Activated naive CD4-positive, alpha-beta T cell treated with anti-CD3 and anti-CD28 coated beads for 36 hours (primary cell): ENCODE measurements at regions of chr5 and their contacts with region 1.

Region 1: GRCh38 chr5:111512375-111513130 is at the start of gene STARD4:
- DNase-seq: peak; percentile 95
- H3K4me3 Mint-ChIP-seq: peak within 1 kb of the TSS; percentile 93
- H3K27ac Mint-ChIP-seq: peak within 1 kb of the TSS; percentile 94
- H3K4me1 Mint-ChIP-seq: peaks cover 37% of the 10 kb centered on the region
- H3K27me3 Mint-ChIP-seq: no peaks in the 10 kb centered on the region
- total RNA-seq, gene STARD4: 45.0 to 47.1 TPM

Region 2: DNA sequence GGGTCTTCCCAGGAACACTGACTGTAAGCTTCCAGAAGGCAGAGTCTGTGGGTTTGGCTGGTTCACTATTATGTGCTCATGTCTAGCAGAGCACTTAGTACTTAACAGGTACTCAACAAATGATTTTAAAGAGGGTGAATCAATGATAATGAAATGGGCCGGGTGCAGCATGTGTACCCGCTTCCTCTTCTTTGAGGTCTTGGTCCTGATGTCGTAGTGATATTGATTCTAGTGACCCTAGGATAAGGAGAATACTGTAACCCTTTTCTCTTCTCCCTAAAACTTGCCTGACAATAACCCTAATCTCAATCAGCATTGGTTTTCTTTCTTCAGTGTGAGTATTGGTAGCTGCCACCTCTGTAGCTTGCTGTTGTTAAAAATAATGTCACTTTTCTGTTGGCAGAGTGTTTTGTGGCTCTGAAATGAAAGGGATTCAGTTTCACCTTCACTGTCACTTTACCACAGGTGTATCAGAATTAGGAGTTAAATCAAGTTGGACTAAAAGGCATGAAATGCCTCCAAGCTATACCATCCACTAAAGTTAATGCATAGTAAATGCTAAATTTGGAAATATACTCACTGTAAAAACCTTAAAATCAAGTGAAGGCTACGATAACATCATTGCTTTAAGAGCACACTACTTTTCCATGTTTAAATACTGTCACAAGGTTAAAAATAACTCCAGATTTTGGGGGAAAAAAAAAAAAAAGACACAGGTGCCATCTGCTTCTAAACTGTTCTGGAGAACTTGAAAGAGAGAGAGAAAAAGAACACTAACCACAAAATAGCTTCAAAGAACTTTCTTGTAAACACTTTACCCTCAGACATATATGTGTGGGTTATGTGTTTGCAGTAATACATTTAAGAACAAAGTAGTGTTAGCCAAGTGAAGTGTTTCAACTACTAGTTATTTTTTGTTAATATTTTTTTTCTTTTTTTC is 282.4 kb before region 1 on chr5:
- CTCF ChIA-PET with region 1: no interaction called
- intact Hi-C with region 1: loop called (anchors 2 kb)
- DNase-seq: peak; percentile 43
- H3K4me3 Mint-ChIP-seq: peak overlapping the region; percentile 68
- H3K27ac Mint-ChIP-seq: peak overlapping the region; percentile 94
- H3K4me1 Mint-ChIP-seq: peaks cover 69% of the 10 kb centered on the region
- H3K27me3 Mint-ChIP-seq: no peaks in the 10 kb centered on the region

Region 3: DNA sequence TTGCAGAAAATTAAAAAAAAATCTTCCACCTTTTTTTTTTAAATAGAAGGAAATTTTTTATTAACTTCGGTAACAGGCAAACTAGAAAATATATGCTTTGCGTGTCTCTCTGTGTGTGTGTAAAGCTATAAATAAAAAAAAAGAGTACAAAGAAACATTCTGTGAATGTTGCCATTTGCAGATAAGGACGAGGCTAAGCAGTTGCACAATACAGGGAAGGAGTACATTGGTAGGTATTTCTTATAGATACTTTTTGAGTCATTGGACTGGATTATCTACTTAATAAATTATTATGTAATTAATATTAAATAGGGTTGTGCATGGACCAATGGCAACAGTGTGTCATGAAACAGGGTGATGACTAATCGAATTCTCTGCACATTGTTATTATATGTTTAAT is 186.0 kb before region 1 on chr5:
- CTCF ChIA-PET with region 1: no interaction called
- intact Hi-C with region 1: no loop called
- DNase-seq: no peak
- H3K4me3 Mint-ChIP-seq: no peak overlapping the region
- H3K27ac Mint-ChIP-seq: no peak overlapping the region
- H3K4me1 Mint-ChIP-seq: peaks cover 18% of the 10 kb centered on the region
- H3K27me3 Mint-ChIP-seq: no peaks in the 10 kb centered on the region

Region 4: DNA sequence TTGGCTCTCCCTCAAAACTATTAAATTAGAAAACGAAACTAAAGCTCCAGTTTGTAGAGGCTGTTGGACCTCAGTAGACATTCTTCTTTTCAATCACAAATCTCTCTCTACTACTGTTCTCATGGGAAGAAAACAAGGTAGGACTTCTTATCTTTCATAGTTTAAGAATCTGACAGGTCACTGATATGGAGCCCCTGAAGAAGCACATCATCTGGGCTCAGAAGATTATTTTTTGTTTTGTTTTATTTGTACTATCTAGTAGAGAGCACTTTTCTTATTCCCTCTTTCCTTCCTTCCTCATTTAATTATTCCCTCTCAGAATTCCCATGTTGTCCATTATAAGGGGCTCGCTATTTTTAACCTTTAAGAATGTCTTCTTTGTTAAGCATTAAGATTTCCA is 26.5 kb before region 1 on chr5:
- CTCF ChIA-PET with region 1: no interaction called
- intact Hi-C with region 1: no loop called
- DNase-seq: no peak
- H3K4me3 Mint-ChIP-seq: no peak overlapping the region
- H3K27ac Mint-ChIP-seq: peak overlapping the region; percentile 41
- H3K4me1 Mint-ChIP-seq: peaks cover 9% of the 10 kb centered on the region
- H3K27me3 Mint-ChIP-seq: no peaks in the 10 kb centered on the region

Region 5: GRCh38 chr5:111530298-111530740 is 17.8 kb after region 1 on chr5:
- CTCF ChIA-PET with region 1: interaction called, 24 read pairs
- intact Hi-C with region 1: loop called (anchors 1 kb)
- DNase-seq: peak; percentile 92
- H3K4me3 Mint-ChIP-seq: peak overlapping the region; percentile 62
- H3K27ac Mint-ChIP-seq: peak overlapping the region; percentile 83
- H3K4me1 Mint-ChIP-seq: peaks cover 16% of the 10 kb centered on the region
- H3K27me3 Mint-ChIP-seq: no peaks in the 10 kb centered on the region